MCF 10A (cell line): ENCODE measurements at regions of chr2 and their contacts with region 1.

Region 1: GRCh38 chr2:96174251-96175144 is 29.3 kb upstream of the DUSP2 start:
- DNase-seq: peak; percentile 81
- H3K4me3 Mint-ChIP-seq: no peak overlapping the region
- H3K27ac Mint-ChIP-seq: no peak overlapping the region
- H3K4me1 Mint-ChIP-seq: no peaks in the 10 kb centered on the region
- H3K27me3 Mint-ChIP-seq: no peaks in the 10 kb centered on the region
- CTCF ChIP-seq: peak; percentile 88

Region 2: DNA sequence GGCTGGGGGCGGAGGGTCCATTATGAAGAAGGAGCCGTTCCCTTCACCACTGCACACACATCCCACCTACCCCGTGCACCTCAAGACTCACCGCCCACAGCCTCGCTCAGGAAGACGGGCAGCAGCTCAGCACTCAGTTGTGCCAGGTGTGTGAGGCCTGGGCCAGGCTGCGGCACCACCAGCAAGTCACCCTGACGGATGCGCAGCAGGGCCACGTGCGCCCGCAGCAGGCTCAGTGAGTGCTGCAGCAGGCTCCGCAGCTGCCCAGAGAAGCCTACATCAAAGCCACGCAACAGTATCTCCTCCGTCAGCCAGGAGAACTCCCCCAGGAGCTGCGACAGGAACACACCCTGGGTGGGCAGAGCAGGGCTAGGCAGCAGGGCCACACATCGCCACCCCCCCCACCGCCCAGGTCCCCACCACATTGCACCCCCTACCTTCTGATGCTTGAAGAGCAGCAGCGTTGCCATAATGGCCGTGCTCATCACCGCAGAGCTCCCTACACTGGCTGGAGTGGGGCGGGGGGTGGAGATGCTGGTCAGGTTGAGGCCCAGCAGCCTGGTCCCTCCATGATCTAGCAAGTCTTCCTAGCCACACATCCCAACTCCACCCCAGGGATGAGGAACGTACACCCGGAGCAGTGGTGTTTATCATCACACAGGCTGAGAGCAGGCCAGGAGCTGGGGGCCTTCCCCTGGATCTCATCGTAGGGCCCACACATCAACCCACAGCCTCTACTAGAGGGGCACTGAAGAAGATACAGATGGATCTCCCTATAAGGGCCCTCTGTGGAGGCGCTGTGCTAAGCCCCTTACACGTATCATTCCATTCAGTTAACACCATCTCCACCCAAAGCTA is 149.9 kb before region 1 on chr2:
- CTCF ChIA-PET with region 1: interaction called, 54 read pairs
- POLR2A ChIA-PET with region 1: no interaction called
- intact Hi-C with region 1: loop called (anchors 10 kb)
- DNase-seq: no peak
- H3K4me3 Mint-ChIP-seq: no peak overlapping the region
- H3K27ac Mint-ChIP-seq: no peak overlapping the region
- H3K4me1 Mint-ChIP-seq: peaks cover 5% of the 10 kb centered on the region
- H3K27me3 Mint-ChIP-seq: no peaks in the 10 kb centered on the region
- CTCF ChIP-seq: no peak

Region 3: DNA sequence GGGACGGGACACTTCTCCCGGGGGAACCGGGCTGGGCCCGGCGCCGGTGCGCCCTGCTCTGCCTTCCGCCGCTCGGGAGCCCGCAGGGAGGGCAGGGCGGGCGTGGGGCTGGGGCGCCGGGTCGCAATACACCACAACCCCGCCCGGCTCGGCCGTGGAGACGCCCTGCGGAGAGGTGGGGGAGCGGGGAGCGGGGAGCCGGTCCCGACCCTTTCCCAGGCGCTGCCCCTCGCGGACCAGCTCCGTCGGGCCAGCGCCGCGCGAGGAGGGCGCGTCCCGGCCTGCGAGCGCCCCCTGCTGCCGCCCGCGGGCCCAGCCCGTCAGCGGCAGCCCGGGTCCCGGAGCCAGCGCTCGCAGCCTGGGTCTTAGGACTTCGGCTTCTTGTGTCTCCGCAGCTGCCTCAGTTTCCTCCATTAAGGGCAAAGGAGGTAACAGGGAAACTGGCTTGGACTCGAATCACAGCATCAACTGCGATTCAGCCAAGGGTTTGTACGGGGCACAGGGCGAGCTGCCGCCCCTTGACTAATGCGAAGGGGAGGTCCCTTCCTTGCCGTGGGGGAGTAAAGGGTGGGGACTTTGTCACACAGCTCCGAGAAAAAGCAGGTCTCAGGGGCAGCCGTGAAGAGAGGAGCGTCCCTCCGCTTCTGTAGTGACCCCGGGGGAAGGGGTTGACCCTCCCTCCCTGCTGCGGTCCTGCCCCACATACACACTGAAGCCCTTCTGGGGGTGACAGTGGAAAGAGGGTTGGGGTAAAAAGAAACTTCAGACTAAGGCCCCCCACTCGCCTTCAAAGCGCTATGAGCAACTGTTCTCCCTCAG is 57.4 kb before region 1 on chr2:
- CTCF ChIA-PET with region 1: interaction called, 23 read pairs
- POLR2A ChIA-PET with region 1: no interaction called
- intact Hi-C with region 1: no loop called
- DNase-seq: peak; percentile 38
- H3K4me3 Mint-ChIP-seq: peak overlapping the region; percentile 38
- H3K27ac Mint-ChIP-seq: no peak overlapping the region
- H3K4me1 Mint-ChIP-seq: no peaks in the 10 kb centered on the region
- H3K27me3 Mint-ChIP-seq: peaks cover 40% of the 10 kb centered on the region
- CTCF ChIP-seq: peak; percentile 84

Region 4: GRCh38 chr2:96138179-96139145 is 36.0 kb before region 1 on chr2 and contains the start of gene ASTL:
- CTCF ChIA-PET with region 1: interaction called, 8 read pairs
- POLR2A ChIA-PET with region 1: interaction called, 3 read pairs
- intact Hi-C with region 1: loop called (anchors 1 kb)
- DNase-seq: peak; percentile 47
- H3K4me3 Mint-ChIP-seq: no peak within 1 kb of the TSS
- H3K27ac Mint-ChIP-seq: no peak within 1 kb of the TSS
- H3K4me1 Mint-ChIP-seq: no peaks in the 10 kb centered on the region
- H3K27me3 Mint-ChIP-seq: peaks cover 17% of the 10 kb centered on the region
- CTCF ChIP-seq: peak; percentile 49
- total RNA-seq, gene ASTL: not detected in 2 replicates

Region 5: DNA sequence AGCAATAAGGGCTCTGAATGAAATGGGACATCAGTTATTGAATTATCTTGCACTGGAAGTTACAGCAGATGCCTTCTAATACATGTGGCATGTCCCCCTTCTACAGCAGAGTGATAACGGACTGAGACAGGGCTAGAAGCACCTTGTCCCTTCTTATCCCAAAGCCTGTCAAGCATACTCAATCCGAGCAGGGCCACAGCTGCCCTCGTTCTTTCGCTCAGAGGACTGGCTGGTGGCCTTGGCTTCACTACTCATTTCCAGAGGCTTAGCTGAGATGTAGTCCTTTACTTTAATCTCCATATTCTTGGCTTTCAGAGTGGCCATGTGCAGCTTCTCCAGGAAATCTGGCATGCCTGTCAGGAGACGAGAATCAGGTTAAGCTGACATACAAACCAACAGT is 12.1 kb after region 1 on chr2:
- CTCF ChIA-PET with region 1: interaction called, 23 read pairs
- POLR2A ChIA-PET with region 1: no interaction called
- intact Hi-C with region 1: no loop called
- DNase-seq: no peak
- H3K4me3 Mint-ChIP-seq: no peak overlapping the region
- H3K27ac Mint-ChIP-seq: no peak overlapping the region
- H3K4me1 Mint-ChIP-seq: peaks cover 5% of the 10 kb centered on the region
- H3K27me3 Mint-ChIP-seq: no peaks in the 10 kb centered on the region
- CTCF ChIP-seq: no peak

Region 6: DNA sequence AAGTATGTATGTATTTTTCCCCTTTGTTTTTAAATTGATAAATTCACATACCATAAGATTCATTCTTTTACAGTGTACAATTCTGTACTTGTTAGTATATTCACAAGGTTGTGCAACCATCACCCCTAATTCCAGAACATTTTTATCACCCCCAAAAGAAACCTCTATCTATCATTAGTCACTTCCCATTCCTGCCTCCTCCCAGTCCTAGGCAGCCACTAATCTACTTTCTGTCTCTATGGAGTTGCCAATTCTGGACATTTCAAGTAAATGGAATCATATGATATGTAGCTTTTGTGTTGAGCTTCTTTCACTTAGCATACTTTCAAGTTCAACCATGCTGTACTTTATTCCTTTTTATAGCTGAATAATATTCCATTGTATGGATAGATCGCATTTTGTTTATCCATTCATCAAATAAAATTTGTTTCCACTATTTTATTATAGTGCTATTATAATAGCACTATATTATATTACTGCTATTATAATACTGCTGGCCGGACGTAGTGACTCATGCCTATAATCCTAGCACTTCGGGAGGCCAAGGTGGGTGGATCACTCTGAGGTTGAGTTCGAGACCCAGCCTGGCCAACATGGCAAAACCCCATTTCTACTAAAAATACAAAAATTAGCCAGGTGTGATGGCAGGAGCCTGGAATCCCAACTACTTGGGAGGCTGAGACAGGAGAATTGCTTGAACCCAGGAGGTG is 23.2 kb after region 1 on chr2:
- CTCF ChIA-PET with region 1: interaction called, 37 read pairs
- POLR2A ChIA-PET with region 1: no interaction called
- intact Hi-C with region 1: no loop called
- DNase-seq: peak; percentile 10
- H3K4me3 Mint-ChIP-seq: no peak overlapping the region
- H3K27ac Mint-ChIP-seq: no peak overlapping the region
- H3K4me1 Mint-ChIP-seq: peaks cover 9% of the 10 kb centered on the region
- H3K27me3 Mint-ChIP-seq: no peaks in the 10 kb centered on the region
- CTCF ChIP-seq: no peak

Region 7: DNA sequence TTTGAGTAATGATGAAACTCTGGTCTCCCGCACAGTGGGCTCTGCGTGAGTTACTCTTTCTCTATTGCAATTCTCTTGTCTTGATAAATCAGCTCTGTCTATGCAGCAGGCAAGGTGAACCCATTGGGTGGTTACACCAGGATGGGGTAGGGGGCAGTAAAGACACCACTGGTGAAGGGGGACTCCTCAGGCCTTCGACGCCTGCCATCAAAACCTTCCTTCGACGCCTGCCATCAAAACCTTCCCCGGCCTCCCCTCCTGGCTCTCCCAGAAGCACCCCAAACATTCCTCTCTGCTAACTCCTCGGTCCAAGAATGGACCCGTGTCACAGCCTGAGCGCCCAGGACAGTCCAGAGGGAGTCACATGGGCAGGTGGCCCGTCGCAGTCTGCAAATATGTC is 38.9 kb after region 1 on chr2:
- CTCF ChIA-PET with region 1: no interaction called
- POLR2A ChIA-PET with region 1: no interaction called
- intact Hi-C with region 1: no loop called
- DNase-seq: no peak
- H3K4me3 Mint-ChIP-seq: no peak overlapping the region
- H3K27ac Mint-ChIP-seq: no peak overlapping the region
- H3K4me1 Mint-ChIP-seq: peaks cover 12% of the 10 kb centered on the region
- H3K27me3 Mint-ChIP-seq: no peaks in the 10 kb centered on the region
- CTCF ChIP-seq: no peak

Region 8: DNA sequence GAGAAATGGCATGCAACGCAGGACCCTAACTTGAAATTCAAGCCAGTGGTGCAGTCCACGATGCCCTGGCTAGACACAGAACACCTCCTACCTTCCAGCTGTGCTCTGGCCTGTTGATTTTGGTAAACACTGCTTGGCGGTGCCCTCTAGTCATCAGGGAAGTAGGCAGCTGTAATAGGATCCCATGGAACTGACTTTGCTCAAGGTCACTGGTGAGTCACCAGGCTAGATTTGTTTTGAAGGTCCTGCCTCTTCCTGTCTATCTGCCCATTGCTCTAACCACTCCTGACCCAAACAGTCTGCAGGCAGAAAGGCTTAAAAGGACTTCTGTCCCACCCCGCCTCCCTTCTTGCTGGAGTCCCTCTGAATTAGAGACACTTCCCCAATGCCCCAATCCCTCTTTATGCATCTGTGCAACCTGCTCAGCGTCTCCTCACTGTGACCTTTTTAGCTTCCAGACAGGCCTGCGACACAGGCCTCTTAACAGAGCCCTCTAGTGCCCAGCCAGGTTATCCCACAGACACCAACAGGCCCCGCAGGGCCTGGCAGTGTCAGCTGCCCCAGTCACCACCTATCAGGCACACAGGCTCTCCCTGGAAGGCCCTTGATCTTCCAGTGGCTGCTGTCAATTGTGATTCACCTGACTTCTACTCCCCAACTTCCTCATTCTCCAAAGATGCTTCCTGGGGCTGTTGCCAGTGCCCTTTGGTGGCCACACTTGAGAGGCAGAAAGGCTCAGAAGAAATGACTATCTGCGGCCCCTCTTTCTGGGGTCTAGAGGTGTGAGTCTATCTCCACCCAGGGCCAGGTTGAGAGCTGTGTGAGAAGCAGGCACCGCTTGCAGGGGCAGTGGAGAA is 86.1 kb after region 1 on chr2:
- CTCF ChIA-PET with region 1: interaction called, 15 read pairs
- POLR2A ChIA-PET with region 1: no interaction called
- intact Hi-C with region 1: no loop called
- DNase-seq: peak; percentile 94
- H3K4me3 Mint-ChIP-seq: peak overlapping the region; percentile 42
- H3K27ac Mint-ChIP-seq: peak overlapping the region; percentile 83
- H3K4me1 Mint-ChIP-seq: peaks cover 34% of the 10 kb centered on the region
- H3K27me3 Mint-ChIP-seq: no peaks in the 10 kb centered on the region
- CTCF ChIP-seq: peak; percentile 45